ENCODE measurements at regions of chr11 and their contacts with region 1.

Region 1: DNA sequence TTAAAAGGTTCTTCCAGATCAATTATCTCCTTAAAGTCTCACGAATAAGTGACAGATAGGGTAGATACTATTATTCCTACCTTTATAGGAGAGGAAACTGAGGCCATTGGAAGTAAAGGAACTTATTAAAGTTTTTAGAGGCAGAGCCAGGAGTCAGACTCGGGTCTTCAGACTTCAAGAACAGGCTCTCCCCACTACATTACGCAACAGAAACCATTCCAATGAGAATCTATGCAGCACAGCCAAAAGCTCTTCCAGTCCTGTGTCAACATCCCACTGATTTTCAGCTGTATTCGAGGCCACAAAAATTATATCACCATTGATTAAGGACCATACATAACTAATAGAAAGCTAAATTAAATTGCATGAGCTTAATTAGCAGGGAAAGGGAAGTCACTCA is 77.4 kb downstream of the RELT start:
- DNase-seq: no peak
- ATAC-seq: no peak
- H3K4me3 ChIP-seq: no peak overlapping the region
- H3K27ac ChIP-seq: no peak overlapping the region
- H3K4me1 ChIP-seq: no peaks in the 10 kb centered on the region
- H3K27me3 ChIP-seq: no peaks in the 10 kb centered on the region
- CTCF ChIP-seq: no peak

Region 2: GRCh38 chr11:72652873-72653630 is 800.5 kb before region 1 on chr11:
- CTCF ChIA-PET with region 1: no interaction called
- POLR2A ChIA-PET with region 1: no interaction called
- intact Hi-C with region 1: no loop called
- DNase-seq: no peak
- ATAC-seq: no peak
- H3K4me3 ChIP-seq: no peak overlapping the region
- H3K27ac ChIP-seq: no peak overlapping the region
- H3K4me1 ChIP-seq: no peaks in the 10 kb centered on the region
- H3K27me3 ChIP-seq: no peaks in the 10 kb centered on the region
- CTCF ChIP-seq: no peak

Region 3: GRCh38 chr11:73429121-73429750 is 24.3 kb before region 1 on chr11:
- CTCF ChIA-PET with region 1: no interaction called
- POLR2A ChIA-PET with region 1: interaction called, 20 read pairs
- intact Hi-C with region 1: no loop called
- DNase-seq: peak; percentile 68
- ATAC-seq: peak; percentile 84
- H3K4me3 ChIP-seq: no peak overlapping the region
- H3K27ac ChIP-seq: peak overlapping the region; percentile 41
- H3K4me1 ChIP-seq: peaks cover 22% of the 10 kb centered on the region
- H3K27me3 ChIP-seq: no peaks in the 10 kb centered on the region
- CTCF ChIP-seq: no peak

Region 4: DNA sequence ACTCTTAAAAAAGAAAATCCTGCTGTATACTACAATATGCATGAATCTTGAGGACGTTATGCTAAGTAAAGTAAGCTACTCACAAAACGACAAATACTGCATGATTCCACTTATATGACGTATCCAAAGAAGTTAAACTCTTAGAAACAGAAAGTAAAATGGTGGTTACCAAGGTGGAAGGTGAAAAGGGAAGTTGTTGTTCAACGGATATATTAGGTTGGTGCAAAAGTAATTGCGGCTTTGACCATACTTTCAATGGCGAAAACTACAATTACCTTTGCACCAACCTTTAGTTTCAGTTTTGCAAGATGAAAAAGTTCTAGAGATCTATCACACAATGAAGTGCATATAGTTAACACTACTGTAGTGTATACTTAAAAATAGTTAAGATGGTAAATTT is 42.6 kb after region 1 on chr11:
- CTCF ChIA-PET with region 1: no interaction called
- POLR2A ChIA-PET with region 1: no interaction called
- intact Hi-C with region 1: no loop called
- DNase-seq: no peak
- ATAC-seq: no peak
- H3K4me3 ChIP-seq: no peak overlapping the region
- H3K27ac ChIP-seq: no peak overlapping the region
- H3K4me1 ChIP-seq: peaks cover 14% of the 10 kb centered on the region
- H3K27me3 ChIP-seq: no peaks in the 10 kb centered on the region
- CTCF ChIP-seq: no peak

Region 5: DNA sequence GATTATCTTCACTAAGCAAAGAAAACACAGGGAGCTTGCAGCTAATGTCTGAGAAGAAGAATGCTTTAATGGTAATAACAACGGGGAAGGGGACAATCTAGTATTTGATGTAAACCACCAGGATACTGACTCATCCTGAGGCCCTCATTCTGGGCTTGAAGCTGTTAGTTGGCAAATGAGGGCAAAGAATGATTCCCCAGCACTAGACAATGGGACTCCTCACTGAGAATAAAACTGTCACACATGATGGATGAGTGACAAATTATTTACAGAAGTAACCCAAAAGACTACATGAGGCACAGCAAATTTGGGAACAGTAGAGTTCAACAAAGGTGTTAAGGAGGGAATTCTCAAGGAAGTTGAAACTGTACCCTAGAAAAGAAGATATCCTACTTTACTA is 68.1 kb after region 1 on chr11:
- CTCF ChIA-PET with region 1: no interaction called
- POLR2A ChIA-PET with region 1: interaction called, 18 read pairs
- intact Hi-C with region 1: no loop called
- DNase-seq: peak; percentile 75
- ATAC-seq: peak; percentile 96
- H3K4me3 ChIP-seq: no peak overlapping the region
- H3K27ac ChIP-seq: 0 out of 2 replicates have a peak overlapping the region, but pooled peaks have one; percentile 16
- H3K4me1 ChIP-seq: peaks cover 14% of the 10 kb centered on the region
- H3K27me3 ChIP-seq: no peaks in the 10 kb centered on the region
- CTCF ChIP-seq: no peak